Activated CD4-positive, alpha-beta T cell treated with anti-CD3 and anti-CD28 coated beads, Interleukin-2, amount 10 ng/mL, durations not matched to agents 7 days and 5 days (primary cell): ENCODE measurements at regions of chr17 and their contacts with region 1.

Region 1: DNA sequence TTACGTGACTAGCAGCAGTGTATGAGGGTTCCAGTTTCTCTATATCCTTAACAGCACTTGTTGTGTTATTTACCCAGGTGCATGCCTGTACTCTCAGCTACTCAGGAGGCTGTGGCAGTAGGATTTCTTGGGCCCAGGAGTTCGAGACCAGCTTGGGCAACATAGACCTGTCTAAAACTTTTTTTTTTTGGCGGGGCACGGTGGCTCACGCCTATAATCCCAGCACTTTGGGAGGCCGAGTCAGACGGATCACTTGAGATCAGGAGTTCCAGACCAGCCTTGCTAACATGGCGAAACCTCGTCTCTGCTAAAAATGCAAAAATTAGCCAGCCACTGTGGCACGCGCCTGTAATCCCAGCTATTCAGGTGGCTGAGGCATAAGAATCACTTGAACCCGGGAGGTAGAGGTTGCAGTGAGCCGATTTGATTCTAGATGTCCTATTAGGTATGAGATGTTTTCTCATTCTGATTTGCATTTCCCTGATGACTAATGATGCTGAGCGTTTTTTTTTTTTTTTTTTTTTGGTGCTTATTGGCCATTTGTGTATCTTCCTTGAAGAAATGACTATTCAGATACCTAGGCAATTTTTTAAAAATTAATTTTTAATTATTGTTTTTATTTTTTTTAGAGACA is 13.4 kb downstream of the CASC3 start:
- DNase-seq: no peak
- H3K4me3 Mint-ChIP-seq: no peak overlapping the region
- H3K27ac Mint-ChIP-seq: peak overlapping the region; percentile 66
- H3K4me1 Mint-ChIP-seq: peaks cover 29% of the 10 kb centered on the region
- H3K27me3 Mint-ChIP-seq: no peaks in the 10 kb centered on the region

Region 2: GRCh38 chr17:40168262-40168832 is 14.6 kb after region 1 on chr17:
- CTCF ChIA-PET with region 1: interaction called, 28 read pairs
- POLR2A ChIA-PET with region 1: interaction called, 4 read pairs
- DNase-seq: peak; percentile 53
- H3K4me3 Mint-ChIP-seq: no peak overlapping the region
- H3K27ac Mint-ChIP-seq: peak overlapping the region; percentile 20
- H3K4me1 Mint-ChIP-seq: peaks cover 6% of the 10 kb centered on the region
- H3K27me3 Mint-ChIP-seq: no peaks in the 10 kb centered on the region